Activated CD4-positive, alpha-beta memory T cell treated with anti-CD3 and anti-CD28 coated beads for 36 hours (primary cell): ENCODE measurements at regions of chr19 and their contacts with region 1.

Region 1: GRCh38 chr19:35648017-35648961 is at the start of gene COX6B1:
- DNase-seq: peak; percentile 96
- H3K4me3 Mint-ChIP-seq: peak within 1 kb of the TSS; percentile 97
- H3K27ac Mint-ChIP-seq: peak within 1 kb of the TSS; percentile 85
- H3K4me1 Mint-ChIP-seq: peaks cover 37% of the 10 kb centered on the region
- H3K27me3 Mint-ChIP-seq: no peaks in the 10 kb centered on the region
- total RNA-seq, gene COX6B1: 444 to 453 TPM

Region 2: GRCh38 chr19:35612559-35613321 is 35.5 kb before region 1 on chr19 and contains the start of gene HAUS5:
- CTCF ChIA-PET with region 1: interaction called, 3 read pairs
- POLR2A ChIA-PET with region 1: interaction called, 14 read pairs
- intact Hi-C with region 1: loop called (anchors 2 kb)
- DNase-seq: peak; percentile 98
- H3K4me3 Mint-ChIP-seq: peak within 1 kb of the TSS; percentile 83
- H3K27ac Mint-ChIP-seq: peak within 1 kb of the TSS; percentile 81
- H3K4me1 Mint-ChIP-seq: peaks cover 31% of the 10 kb centered on the region
- H3K27me3 Mint-ChIP-seq: peaks cover 1% of the 10 kb centered on the region
- total RNA-seq, gene HAUS5: 36.6 to 43.1 TPM

Region 3: DNA sequence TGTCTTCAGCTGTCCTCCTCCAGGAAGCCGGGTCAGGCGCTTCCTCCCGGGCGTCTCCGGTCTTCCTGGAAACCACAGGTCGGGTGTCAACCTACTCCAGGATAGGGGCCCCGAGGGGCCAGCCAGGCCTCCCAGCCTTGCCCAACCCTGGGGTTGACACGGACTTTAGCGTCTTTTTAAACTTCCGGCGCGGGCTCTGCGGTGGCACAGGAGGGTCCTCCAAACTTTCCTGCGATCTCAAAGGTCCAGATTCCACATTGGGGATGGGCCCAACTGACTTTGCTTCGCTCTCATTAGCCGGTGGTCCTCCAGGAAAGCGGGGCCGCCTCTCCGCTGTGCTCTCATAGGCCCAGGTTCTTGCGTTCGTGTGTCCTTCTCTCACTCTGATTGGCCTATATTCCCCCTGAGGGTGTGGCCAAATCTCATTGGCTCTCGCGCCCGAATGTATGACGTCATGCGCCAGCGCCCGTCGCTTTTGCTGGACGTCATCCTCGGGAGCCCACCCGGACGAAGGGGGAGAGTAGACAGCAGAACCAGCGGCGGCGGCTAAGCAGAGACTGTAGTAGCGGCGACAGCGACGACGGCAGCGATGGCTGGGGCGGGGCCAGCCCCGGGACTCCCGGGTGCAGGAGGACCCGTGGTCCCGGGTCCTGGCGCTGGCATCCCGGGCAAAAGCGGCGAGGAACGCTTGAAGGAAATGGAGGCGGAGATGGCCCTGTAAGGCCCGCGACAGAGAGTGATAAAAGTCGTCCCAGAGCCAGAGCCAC is 19.5 kb before region 1 on chr19 and contains the start of gene RBM42:
- CTCF ChIA-PET with region 1: no interaction called
- POLR2A ChIA-PET with region 1: interaction called, 5 read pairs
- intact Hi-C with region 1: loop called (anchors 1 kb)
- DNase-seq: peak; percentile 98
- H3K4me3 Mint-ChIP-seq: peak within 1 kb of the TSS; percentile 99
- H3K27ac Mint-ChIP-seq: peak within 1 kb of the TSS; percentile 90
- H3K4me1 Mint-ChIP-seq: peaks cover 16% of the 10 kb centered on the region
- H3K27me3 Mint-ChIP-seq: no peaks in the 10 kb centered on the region
- total RNA-seq, gene RBM42: 86.4 to 88.0 TPM

Region 4: DNA sequence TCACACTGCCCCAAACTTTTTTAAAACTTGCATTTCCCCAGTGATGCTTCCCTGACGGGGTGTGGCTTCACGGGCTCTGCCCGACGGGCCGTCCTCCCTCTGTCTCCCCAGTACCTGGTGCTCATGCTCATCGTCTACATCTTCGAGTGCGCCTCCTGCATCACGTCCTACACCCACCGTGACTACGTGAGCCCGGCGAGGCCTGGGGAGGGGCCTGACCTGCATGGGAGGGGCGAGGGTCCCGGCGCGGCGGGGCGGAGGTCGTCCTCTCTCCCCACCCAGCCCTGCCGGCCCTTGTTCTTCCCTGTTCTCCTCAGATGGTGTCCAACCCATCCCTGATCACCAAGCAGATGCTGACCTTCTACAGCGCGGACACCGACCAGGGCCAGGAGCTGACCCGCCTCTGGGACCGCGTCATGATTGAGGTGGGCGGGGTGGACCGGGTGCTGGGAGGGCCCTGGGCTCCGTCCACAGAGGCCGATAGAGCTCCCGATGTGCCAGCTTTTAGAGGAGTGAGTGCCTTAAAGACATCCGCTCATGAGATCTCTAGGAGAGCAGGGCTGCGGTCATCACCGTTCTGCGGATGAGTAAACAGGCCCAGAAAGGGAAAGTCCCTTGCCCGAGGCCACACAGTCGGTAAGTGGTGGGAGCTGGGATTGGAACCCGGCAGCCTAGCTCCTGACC is 25.0 kb after region 1 on chr19:
- CTCF ChIA-PET with region 1: interaction called, 6 read pairs
- POLR2A ChIA-PET with region 1: interaction called, 9 read pairs
- intact Hi-C with region 1: loop called (anchors 1 kb)
- DNase-seq: peak; percentile 86
- H3K4me3 Mint-ChIP-seq: peak overlapping the region; percentile 69
- H3K27ac Mint-ChIP-seq: peak overlapping the region; percentile 38
- H3K4me1 Mint-ChIP-seq: peaks cover 8% of the 10 kb centered on the region
- H3K27me3 Mint-ChIP-seq: peaks cover 23% of the 10 kb centered on the region

Region 5: GRCh38 chr19:35740423-35741202 is 92.3 kb after region 1 on chr19:
- CTCF ChIA-PET with region 1: interaction called, 3 read pairs
- POLR2A ChIA-PET with region 1: no interaction called
- intact Hi-C with region 1: loop called (anchors 10 kb)
- DNase-seq: peak; percentile 98
- H3K4me3 Mint-ChIP-seq: peak overlapping the region; percentile 89
- H3K27ac Mint-ChIP-seq: peak overlapping the region; percentile 90
- H3K4me1 Mint-ChIP-seq: peaks cover 31% of the 10 kb centered on the region
- H3K27me3 Mint-ChIP-seq: no peaks in the 10 kb centered on the region

Region 6: GRCh38 chr19:36139473-36140303 is 491.4 kb after region 1 on chr19 and contains the start of gene CAPNS1:
- CTCF ChIA-PET with region 1: no interaction called
- POLR2A ChIA-PET with region 1: no interaction called
- intact Hi-C with region 1: loop called (anchors 10 kb)
- DNase-seq: peak; percentile 96
- H3K4me3 Mint-ChIP-seq: peak within 1 kb of the TSS; percentile 92
- H3K27ac Mint-ChIP-seq: peak within 1 kb of the TSS; percentile 97
- H3K4me1 Mint-ChIP-seq: peaks cover 26% of the 10 kb centered on the region
- H3K27me3 Mint-ChIP-seq: no peaks in the 10 kb centered on the region
- total RNA-seq, gene CAPNS1: 430 to 447 TPM